RWPE1 (cell line): ENCODE measurements at regions of chr17 and their contacts with region 1.

Region 1: DNA sequence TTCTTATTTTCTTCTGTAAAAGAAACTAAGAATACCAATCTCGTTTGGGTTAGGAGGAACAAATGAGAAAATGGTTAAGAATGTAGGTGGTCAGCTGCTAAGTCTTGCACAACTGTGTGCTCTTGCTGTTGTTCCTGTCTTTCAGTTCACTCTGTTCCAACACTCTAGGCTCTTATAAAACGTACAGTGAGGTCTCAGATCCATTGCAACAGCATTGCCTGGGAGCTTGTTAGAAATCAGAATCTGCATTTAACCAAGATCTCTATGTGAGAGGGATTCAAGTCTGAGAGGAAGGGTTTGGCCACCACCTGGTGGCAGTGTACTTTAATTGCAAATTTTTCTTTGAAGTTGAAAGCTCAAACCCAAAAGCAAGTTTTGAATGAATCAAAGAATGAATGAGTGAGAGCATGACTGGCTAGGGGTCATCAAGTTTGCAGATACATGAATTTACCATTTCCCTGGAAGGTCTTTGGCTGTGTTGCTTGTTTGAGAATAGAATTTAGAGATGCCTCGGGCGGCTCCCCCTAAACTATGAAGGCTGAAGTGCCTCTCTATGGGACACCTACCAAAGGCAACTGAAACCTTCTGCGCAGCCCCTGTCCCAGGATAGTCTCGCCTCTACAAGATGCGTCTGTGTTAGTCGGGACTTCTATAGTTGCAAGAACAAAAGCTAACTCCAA is 2.5 kb downstream of the ALOX15B start:
- DNase-seq: peak; percentile 53
- H3K27ac ChIP-seq: peak overlapping the region; percentile 79
- CTCF ChIP-seq: peak; percentile 70

Region 2: GRCh38 chr17:7931709-7932482 is 109.5 kb before region 1 on chr17 and contains the starts of genes CNTROB and TRAPPC1:
- CTCF ChIA-PET with region 1: interaction called, 14 read pairs
- POLR2A ChIA-PET with region 1: interaction called, 3 read pairs
- DNase-seq: peak; percentile 99
- H3K27ac ChIP-seq: peak within 1 kb of the TSS; percentile 80
- CTCF ChIP-seq: no peak

Region 3: DNA sequence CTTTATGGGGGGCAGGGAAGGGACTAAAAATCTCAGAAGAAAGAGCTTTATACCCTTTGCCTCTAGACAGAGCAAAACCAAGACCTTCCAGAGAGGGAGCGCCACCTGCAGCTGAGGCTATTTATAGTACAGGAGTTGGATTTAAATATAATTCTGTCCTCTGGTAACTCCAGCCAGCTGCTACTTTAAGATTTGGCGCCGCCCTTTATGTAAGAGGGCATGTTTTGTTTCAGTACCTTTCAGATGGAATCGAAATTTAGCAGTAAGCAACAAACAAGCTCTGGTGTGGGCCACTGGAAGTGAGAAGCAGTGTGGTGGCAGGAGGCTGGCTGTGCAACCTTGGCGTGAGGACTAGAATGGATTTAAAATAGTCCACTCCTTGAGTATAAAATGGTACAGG is 44.2 kb before region 1 on chr17:
- CTCF ChIA-PET with region 1: interaction called, 10 read pairs
- POLR2A ChIA-PET with region 1: no interaction called
- DNase-seq: no peak
- H3K27ac ChIP-seq: no peak overlapping the region
- CTCF ChIP-seq: peak; percentile 34

Region 4: DNA sequence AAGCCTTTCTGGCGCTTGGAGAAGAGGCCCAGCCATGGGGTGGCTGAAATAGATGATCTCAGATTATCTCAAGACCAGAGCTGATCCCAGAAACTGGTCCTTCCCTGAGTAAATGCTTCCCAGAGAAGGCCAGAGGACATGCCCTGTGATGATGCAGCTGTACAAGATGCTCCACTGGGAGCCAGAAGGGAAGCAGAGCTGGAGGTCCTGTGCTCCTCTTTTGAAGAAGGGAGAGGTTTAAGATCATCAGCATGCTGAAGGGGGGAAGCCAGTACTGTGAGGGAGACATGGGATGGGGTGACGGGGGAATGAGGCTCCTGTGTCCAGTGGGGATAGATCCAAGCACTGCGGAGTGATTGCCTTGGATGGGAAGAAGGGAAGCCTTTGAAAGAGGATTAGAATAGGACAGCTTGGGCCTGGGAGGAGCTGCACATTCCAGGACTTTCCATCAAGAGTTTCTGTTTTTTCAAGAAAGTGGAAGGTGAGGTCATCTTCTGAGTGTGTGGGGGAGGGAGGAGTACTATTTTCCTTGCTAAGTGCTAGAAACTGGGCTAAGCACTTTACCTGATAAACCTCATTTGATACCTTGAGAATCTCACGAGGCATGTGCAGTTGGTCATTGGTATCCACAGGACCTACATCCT is 18.9 kb before region 1 on chr17:
- CTCF ChIA-PET with region 1: interaction called, 26 read pairs
- POLR2A ChIA-PET with region 1: interaction called, 3 read pairs
- DNase-seq: no peak
- H3K27ac ChIP-seq: no peak overlapping the region
- CTCF ChIP-seq: no peak

Region 5: GRCh38 chr17:8057691-8058114 is 16.3 kb after region 1 on chr17:
- CTCF ChIA-PET with region 1: interaction called, 15 read pairs
- POLR2A ChIA-PET with region 1: no interaction called
- DNase-seq: peak; percentile 82
- H3K27ac ChIP-seq: no peak overlapping the region
- CTCF ChIP-seq: peak; percentile 77

Region 6: GRCh38 chr17:8173056-8173870 is 131.9 kb after region 1 on chr17:
- CTCF ChIA-PET with region 1: no interaction called
- POLR2A ChIA-PET with region 1: no interaction called
- DNase-seq: peak; percentile 75
- H3K27ac ChIP-seq: peak overlapping the region; percentile 70; the same call in 1 of the 2 replicates
- CTCF ChIP-seq: no peak